Caco-2 (cell line): ENCODE measurements at regions of chr12 and their contacts with region 1.

Region 1: DNA sequence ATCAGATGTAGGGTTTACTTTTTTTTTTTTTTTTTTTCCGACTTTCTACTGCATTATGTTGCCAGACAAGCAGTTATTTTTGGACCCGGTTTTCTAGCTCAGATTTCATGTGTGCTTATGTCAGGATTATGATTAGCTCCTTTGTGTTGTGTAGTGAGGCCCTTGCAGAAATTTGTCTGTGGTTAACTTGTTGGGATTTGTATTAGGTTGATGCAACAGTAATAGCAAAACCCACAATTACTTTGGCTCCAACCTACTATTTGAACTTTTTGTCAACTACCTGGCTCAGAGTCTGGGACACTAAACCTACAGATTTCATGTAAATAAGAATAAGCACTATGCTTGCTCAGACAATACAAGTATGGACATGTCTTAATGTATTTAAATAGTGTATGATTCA is 44.1 kb upstream of the KCNJ8 start:
- DNase-seq: peak in 1 of 2 experiments; percentile 57
- H3K4me3 ChIP-seq: no peak overlapping the region
- H3K4me3 Mint-ChIP-seq: peak overlapping the region; percentile 61
- H3K27ac Mint-ChIP-seq: peak overlapping the region; percentile 94
- H3K4me1 ChIP-seq: peaks cover 78% of the 10 kb centered on the region
- H3K4me1 Mint-ChIP-seq: peaks cover 55% of the 10 kb centered on the region
- H3K27me3 ChIP-seq: no peaks in the 10 kb centered on the region
- H3K27me3 Mint-ChIP-seq: no peaks in the 10 kb centered on the region
- CTCF ChIP-seq: no peak

Region 2: GRCh38 chr12:21697904-21698630 is 120.6 kb before region 1 on chr12:
- CTCF ChIA-PET with region 1: interaction called, 4 read pairs
- POLR2A ChIA-PET with region 1: no interaction called
- intact Hi-C with region 1: loop called (anchors 1 kb)
- DNase-seq: peak in 1 of 2 experiments; percentile 47
- H3K4me3 ChIP-seq: no peak overlapping the region
- H3K4me3 Mint-ChIP-seq: peak overlapping the region; percentile 45
- H3K27ac Mint-ChIP-seq: peak overlapping the region; percentile 13
- H3K4me1 ChIP-seq: peaks cover 11% of the 10 kb centered on the region; the same call in 1 of the 2 replicates
- H3K4me1 Mint-ChIP-seq: peaks cover 13% of the 10 kb centered on the region
- H3K27me3 ChIP-seq: no peaks in the 10 kb centered on the region
- H3K27me3 Mint-ChIP-seq: no peaks in the 10 kb centered on the region
- CTCF ChIP-seq: peak; percentile 54 to 85

Region 3: GRCh38 chr12:21788089-21788983 is 30.3 kb before region 1 on chr12:
- CTCF ChIA-PET with region 1: no interaction called
- POLR2A ChIA-PET with region 1: no interaction called
- intact Hi-C with region 1: no loop called
- DNase-seq: no peak
- H3K4me3 ChIP-seq: no peak overlapping the region
- H3K4me3 Mint-ChIP-seq: no peak overlapping the region
- H3K27ac Mint-ChIP-seq: no peak overlapping the region
- H3K4me1 ChIP-seq: no peaks in the 10 kb centered on the region
- H3K4me1 Mint-ChIP-seq: peaks cover 7% of the 10 kb centered on the region
- H3K27me3 ChIP-seq: no peaks in the 10 kb centered on the region
- H3K27me3 Mint-ChIP-seq: no peaks in the 10 kb centered on the region
- CTCF ChIP-seq: no peak

Region 4: GRCh38 chr12:21800011-21800410 is 18.6 kb before region 1 on chr12:
- CTCF ChIA-PET with region 1: no interaction called
- POLR2A ChIA-PET with region 1: interaction called, 4 read pairs
- intact Hi-C with region 1: loop called (anchors 1 kb)
- DNase-seq: peak in 1 of 2 experiments; percentile 47
- H3K4me3 ChIP-seq: no peak overlapping the region
- H3K4me3 Mint-ChIP-seq: no peak overlapping the region
- H3K27ac Mint-ChIP-seq: peak overlapping the region; percentile 29
- H3K4me1 ChIP-seq: peaks cover 34% of the 10 kb centered on the region
- H3K4me1 Mint-ChIP-seq: peaks cover 7% of the 10 kb centered on the region
- H3K27me3 ChIP-seq: no peaks in the 10 kb centered on the region
- H3K27me3 Mint-ChIP-seq: no peaks in the 10 kb centered on the region
- CTCF ChIP-seq: no peak

Region 5: DNA sequence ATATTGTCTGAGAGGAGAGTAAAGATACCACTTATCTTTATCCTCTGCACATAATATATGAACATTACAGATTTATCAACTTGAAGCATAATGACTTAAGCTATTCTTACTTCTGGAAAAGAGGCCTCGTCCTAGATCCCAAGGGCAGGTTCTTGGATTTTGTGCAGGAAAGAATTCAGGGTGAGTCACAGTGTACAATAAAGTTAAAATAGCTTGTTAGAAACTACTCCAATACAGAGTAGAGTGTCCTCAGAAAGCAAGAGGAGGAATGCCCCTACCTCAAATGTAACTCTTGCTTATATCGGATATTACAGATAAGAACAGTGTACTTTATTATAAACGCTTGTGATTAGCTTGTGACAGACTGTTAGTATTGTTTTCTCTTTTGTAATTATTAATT is 164.5 kb after region 1 on chr12:
- CTCF ChIA-PET with region 1: no interaction called
- POLR2A ChIA-PET with region 1: no interaction called
- intact Hi-C with region 1: loop called (anchors 2 kb)
- DNase-seq: no peak
- H3K4me3 ChIP-seq: no peak overlapping the region
- H3K4me3 Mint-ChIP-seq: no peak overlapping the region
- H3K27ac Mint-ChIP-seq: no peak overlapping the region
- H3K4me1 ChIP-seq: peaks cover 8% of the 10 kb centered on the region
- H3K4me1 Mint-ChIP-seq: peaks cover 30% of the 10 kb centered on the region
- H3K27me3 ChIP-seq: no peaks in the 10 kb centered on the region
- H3K27me3 Mint-ChIP-seq: no peaks in the 10 kb centered on the region
- CTCF ChIP-seq: no peak

Region 6: GRCh38 chr12:22046090-22046967 is 227.7 kb after region 1 on chr12 and contains the start of gene CMAS:
- CTCF ChIA-PET with region 1: no interaction called
- POLR2A ChIA-PET with region 1: no interaction called
- intact Hi-C with region 1: loop called (anchors 5 kb)
- DNase-seq: peak; percentile 84 to 86
- H3K4me3 ChIP-seq: peak within 1 kb of the TSS; percentile 98
- H3K4me3 Mint-ChIP-seq: peak within 1 kb of the TSS; percentile 93
- H3K27ac Mint-ChIP-seq: peak within 1 kb of the TSS; percentile 87
- H3K4me1 ChIP-seq: peaks cover 62% of the 10 kb centered on the region
- H3K4me1 Mint-ChIP-seq: peaks cover 68% of the 10 kb centered on the region
- H3K27me3 ChIP-seq: no peaks in the 10 kb centered on the region
- H3K27me3 Mint-ChIP-seq: no peaks in the 10 kb centered on the region
- CTCF ChIP-seq: no peak
- total RNA-seq, gene CMAS: 70.4 and 80.7 TPM in 2 replicates